ENCODE measurements at regions of chr14 and their contacts with region 1.

Region 1: DNA sequence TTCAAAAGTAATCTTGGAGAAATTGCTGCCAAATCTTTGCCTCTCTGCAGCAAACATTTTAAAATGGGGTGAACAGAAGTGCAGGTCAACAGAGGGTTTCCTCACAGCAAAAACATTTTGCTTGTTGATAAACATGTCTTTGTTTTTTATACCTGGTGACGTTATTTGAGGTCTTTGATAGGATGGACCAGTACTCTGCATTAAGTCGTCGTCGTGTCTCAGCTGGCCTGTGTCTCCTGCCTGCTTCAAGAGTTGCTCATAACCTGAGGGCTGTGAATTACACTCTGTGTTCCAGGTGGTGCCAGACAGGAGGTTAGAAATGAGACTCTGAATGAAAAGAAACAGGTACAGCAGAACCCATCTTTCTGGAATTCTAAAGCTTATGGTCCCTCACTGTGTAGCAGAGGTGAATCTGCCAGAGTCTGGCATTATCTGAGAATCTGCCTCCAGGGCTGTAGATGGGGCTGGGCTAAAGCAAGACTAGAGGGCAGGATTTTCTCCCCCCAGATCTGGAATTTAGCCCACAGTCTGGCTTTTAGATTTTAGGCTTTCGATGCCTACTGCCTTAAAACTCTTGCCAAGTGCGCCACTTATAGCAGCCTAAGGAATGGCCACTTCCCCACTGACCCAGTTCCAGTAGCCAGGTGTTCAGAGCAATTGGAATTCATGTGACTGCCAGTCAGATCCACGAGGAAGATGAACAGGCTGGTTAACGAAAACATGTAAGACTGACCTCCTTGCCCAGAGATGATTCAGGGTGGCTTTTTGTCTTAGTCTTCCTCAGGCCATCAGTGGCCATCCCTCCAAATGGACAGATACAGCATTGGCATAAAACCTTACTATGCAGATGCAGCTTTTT is 161.2 kb downstream of the PRKCH start:
- DNase-seq: no peak
- ATAC-seq: no peak
- H3K4me3 Mint-ChIP-seq: no peak overlapping the region
- H3K27ac Mint-ChIP-seq: no peak overlapping the region
- H3K4me1 Mint-ChIP-seq: peaks cover 21% of the 10 kb centered on the region
- H3K27me3 Mint-ChIP-seq: no peaks in the 10 kb centered on the region; the same call in 1 of the 2 replicates
- CTCF ChIP-seq: no peak

Region 2: GRCh38 chr14:61456720-61457119 is 25.9 kb before region 1 on chr14:
- CTCF ChIA-PET with region 1: no interaction called
- POLR2A ChIA-PET with region 1: no interaction called
- DNase-seq: peak; percentile 77
- ATAC-seq: peak; percentile 77
- H3K4me3 Mint-ChIP-seq: no peak overlapping the region
- H3K27ac Mint-ChIP-seq: no peak overlapping the region
- H3K4me1 Mint-ChIP-seq: peaks cover 15% of the 10 kb centered on the region
- H3K27me3 Mint-ChIP-seq: no peaks in the 10 kb centered on the region
- CTCF ChIP-seq: peak; percentile 77

Region 3: DNA sequence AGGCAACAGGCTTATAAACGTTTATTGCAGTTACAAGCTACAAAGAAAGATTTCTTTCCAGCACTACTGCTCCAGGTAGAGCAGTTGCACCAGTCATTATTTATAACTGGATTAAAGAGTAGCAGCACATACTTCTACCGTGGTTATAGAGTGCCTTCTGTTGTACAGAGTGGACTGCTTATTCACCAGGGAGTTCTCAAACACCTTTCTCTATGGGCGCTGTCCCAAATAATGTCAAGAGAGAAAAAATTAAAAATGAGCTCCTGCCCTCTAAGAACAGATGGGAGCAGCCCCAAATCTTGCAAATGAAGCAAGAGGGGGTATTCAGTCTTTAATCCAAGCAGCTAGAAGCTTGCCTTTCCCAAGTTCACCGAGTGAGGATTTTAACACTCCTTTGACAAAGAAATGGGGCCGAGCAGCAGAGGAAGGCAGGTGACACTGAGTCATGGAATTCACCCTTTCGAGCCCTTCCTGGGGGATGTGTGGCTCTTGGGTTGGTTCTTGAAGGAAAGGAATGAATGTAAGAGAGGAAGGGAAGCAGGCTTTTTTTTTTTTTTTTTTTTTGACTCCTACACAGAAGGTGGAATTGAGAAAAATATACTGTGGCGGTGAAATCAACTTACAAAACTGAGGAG is 20.0 kb after region 1 on chr14:
- CTCF ChIA-PET with region 1: no interaction called
- POLR2A ChIA-PET with region 1: interaction called, 11 read pairs
- DNase-seq: no peak
- ATAC-seq: peak; percentile 46
- H3K4me3 Mint-ChIP-seq: peak overlapping the region; percentile 16
- H3K27ac Mint-ChIP-seq: peak overlapping the region; percentile 99
- H3K4me1 Mint-ChIP-seq: peaks cover 78% of the 10 kb centered on the region
- H3K27me3 Mint-ChIP-seq: no peaks in the 10 kb centered on the region
- CTCF ChIP-seq: no peak

Region 4: DNA sequence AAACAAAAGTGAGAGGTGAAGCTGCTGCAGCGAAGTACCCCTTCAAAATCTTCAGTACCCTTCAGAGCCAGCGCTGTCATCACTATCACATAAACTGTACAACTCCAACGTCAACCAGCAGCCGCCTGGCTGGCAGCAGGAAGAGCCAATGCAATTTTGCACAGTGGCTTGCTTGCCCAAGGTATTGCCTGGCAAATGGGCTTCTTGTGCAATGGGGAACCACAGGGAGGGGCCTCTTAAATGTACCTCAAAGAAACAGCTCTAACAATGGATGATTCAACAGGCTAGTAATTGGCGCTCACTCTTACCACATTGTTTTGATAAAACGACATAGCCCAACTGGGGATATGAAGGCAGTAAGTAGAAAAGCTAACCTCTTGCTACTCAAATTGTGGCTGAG is 87.2 kb after region 1 on chr14:
- CTCF ChIA-PET with region 1: no interaction called
- POLR2A ChIA-PET with region 1: no interaction called
- DNase-seq: no peak
- ATAC-seq: no peak
- H3K4me3 Mint-ChIP-seq: no peak overlapping the region
- H3K27ac Mint-ChIP-seq: no peak overlapping the region
- H3K4me1 Mint-ChIP-seq: peaks cover 33% of the 10 kb centered on the region
- H3K27me3 Mint-ChIP-seq: peaks cover 10% of the 10 kb centered on the region
- CTCF ChIP-seq: no peak